Right lobe of liver (tissue), 6 donors: ENCODE measurements at regions of chr16 and their contacts with region 1.

Region 1: GRCh38 chr16:81703177-81704155 is 75.6 kb upstream of the PLCG2 start:
- DNase-seq: peak in 2 of 3 donors; percentile 14 to 43
- ATAC-seq: no peak
- H3K4me3 ChIP-seq: no peak overlapping the region
- H3K27ac ChIP-seq: no peak overlapping the region
- H3K4me1 ChIP-seq: peaks cover 0 to 9% (median 4%) of the 10 kb centered on the region in 4 donors
- H3K27me3 ChIP-seq: no peaks in the 10 kb centered on the region
- CTCF ChIP-seq: no peak
- POLR2A ChIP-seq: no peak

Region 2: DNA sequence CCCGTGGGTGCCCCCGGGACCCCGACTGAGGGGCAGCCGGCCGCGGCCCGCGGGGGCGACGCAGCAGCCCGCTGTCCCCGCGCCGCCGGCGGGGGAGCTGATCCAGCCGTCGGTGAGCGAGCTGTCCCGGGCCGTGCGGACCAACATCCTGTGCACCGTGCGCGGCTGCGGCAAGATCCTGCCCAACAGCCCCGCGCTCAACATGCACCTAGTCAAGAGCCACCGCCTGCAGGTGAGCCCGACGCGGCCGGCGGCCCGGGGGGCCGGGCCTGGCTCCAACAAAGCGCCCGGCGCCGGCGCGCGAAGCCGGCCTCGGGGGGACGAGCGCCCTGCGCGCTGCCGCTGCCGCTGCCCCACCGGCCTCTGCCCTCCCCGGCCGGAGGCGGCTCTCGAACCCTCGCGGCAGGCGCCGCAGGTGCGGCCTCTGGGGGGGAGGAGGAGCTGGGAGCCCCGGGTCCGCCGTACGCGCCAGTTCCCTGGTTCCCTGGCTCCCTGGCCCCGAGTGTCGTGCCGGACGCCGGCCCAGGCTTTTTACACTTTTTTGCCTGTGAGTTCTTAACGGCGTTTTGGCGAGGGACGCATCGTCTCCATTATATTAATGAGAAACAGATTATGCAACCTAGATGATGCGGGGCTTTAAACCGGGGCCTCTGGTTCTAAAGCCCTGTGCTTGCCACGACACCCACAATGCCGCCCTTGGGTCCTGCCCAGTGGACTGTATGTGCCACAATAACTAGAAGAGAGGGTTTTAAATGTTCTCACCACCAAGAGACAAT is 667.3 kb before region 1 on chr16:
- intact Hi-C with region 1: no loop called
- DNase-seq: peak; percentile 54 to 66 (median 55)
- ATAC-seq: peak; percentile 22 to 53 (median 33)
- H3K4me3 ChIP-seq: peak overlapping the region; percentile 67 to 86 (median 75)
- H3K27ac ChIP-seq: peak overlapping the region in 2 of 3 donors; percentile 20 to 70
- H3K4me1 ChIP-seq: peaks cover 0 to 14% (median 6%) of the 10 kb centered on the region in 4 donors
- H3K27me3 ChIP-seq: no peaks in the 10 kb centered on the region
- CTCF ChIP-seq: no peak
- POLR2A ChIP-seq: no peak

Region 3: GRCh38 chr16:81415751-81416150 is 287.7 kb before region 1 on chr16:
- intact Hi-C with region 1: loop called in 1 of 2 experiments (anchors 10 kb)
- DNase-seq: no peak
- ATAC-seq: no peak
- H3K4me3 ChIP-seq: no peak overlapping the region
- H3K27ac ChIP-seq: no peak overlapping the region
- H3K4me1 ChIP-seq: no peaks in the 10 kb centered on the region
- H3K27me3 ChIP-seq: no peaks in the 10 kb centered on the region
- CTCF ChIP-seq: no peak
- POLR2A ChIP-seq: no peak

Region 4: DNA sequence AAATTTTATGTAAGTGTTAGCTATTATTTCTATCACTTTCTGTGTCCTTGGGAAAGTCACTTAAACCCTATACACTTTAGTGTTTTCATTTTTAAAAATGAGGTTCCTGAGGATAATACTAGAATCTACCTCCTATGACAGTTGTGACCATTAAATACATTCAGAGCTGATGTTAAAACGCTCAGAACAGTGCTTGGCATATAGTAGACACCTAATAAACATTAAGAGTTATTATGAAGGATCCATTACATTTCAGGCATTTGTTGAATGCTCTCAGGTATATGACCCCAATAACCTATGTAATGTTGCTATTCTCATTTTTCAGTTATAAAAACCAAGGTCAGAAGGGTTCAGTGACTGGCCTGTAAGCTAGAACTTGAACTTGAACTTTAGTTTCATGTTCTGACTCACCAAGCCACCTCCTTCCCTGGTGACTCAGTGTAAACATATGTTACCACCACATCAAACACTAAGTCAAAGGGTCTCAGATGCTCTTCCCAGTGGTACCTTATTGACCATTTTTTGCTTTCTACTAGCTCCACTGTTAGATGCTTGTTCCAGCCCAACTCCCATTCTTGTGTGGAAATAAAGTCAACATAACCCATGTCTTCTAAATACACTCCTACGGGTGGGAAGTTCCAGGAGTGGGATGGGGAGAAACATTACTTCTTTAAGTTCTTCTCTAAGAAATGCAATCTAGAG is 379.2 kb after region 1 on chr16:
- intact Hi-C with region 1: no loop called
- DNase-seq: no peak
- ATAC-seq: peak; percentile 53 to 72 (median 66)
- H3K4me3 ChIP-seq: peak overlapping the region in 2 of 3 donors; percentile 30 to 38
- H3K27ac ChIP-seq: peak overlapping the region; percentile 29 to 86 (median 82)
- H3K4me1 ChIP-seq: peaks cover 0 to 76% (median 26%) of the 10 kb centered on the region in 4 donors
- H3K27me3 ChIP-seq: no peaks in the 10 kb centered on the region
- CTCF ChIP-seq: no peak
- POLR2A ChIP-seq: no peak